ENCODE measurements at regions of chr14 and their contacts with region 1.

Region 1: GRCh38 chr14:67674481-67675169 is at the start of gene VTI1B:
- ATAC-seq: peak; percentile 87 to 92 (median 90)
- H3K4me3 ChIP-seq: peak within 1 kb of the TSS; percentile 62 to 100 (median 94)
- H3K27ac ChIP-seq: peak within 1 kb of the TSS; percentile 99 to 100
- H3K4me1 ChIP-seq: peaks cover 4 to 12% of the 10 kb centered on the region in 2 donors
- total RNA-seq, gene VTI1B: 48.8 to 90.4 (median 63.4) TPM

Region 2: DNA sequence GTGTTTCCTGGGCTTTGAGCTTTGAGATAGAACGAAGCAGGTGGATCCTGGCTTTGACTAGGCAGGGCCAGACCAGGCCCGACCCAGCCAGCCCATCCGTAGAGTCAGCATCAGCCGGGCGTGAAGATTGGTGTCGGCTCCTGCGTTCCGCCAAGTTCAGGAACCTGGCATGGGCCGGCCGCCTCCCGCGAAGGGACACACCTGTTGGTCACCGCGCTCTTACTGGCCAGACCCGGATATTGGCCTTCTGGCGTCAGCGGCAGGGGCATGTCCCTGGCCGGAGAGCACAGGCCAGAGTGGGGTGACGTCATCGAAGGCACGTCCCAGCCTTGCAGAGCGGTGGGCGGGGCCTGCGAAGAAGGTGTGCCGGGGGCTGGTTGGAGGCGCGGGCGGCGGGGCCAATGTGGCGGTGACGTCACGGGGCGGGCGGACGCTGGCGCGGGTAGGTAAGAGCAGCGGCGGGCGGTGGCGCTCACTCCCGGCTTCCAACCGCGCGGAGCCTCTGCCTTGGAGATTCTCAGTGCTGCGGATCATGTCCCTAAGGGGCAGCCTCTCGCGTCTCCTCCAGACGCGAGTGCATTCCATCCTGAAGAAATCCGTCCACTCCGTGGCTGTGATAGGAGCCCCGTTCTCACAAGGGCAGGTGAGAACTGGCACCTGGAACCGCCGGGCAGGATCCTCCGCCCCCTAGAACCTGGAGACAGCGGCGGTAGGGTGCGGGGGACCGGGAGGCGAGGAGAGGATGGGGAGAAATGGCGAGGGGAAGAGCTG is 55.0 kb before region 1 on chr14 and contains the start of gene ARG2:
- in situ Hi-C with region 1: loop called in 1 of 9 experiments (anchors 10 kb)
- ATAC-seq: peak; percentile 90 to 95 (median 92)
- H3K4me3 ChIP-seq: peak within 1 kb of the TSS; percentile 45 to 72 (median 58)
- H3K27ac ChIP-seq: peak within 1 kb of the TSS; percentile 32 to 50
- H3K4me1 ChIP-seq: peaks cover 7 to 10% of the 10 kb centered on the region in 2 donors
- total RNA-seq, gene ARG2: 1.4 to 46.3 (median 17.4) TPM

Measured in motor neuron (in vitro differentiated cells).